OCI-LY7 (cell line): ENCODE measurements at regions of chr17 and their contacts with region 1.

Region 1: GRCh38 chr17:58631523-58632323 is 60.1 kb downstream of the TEX14 start:
- DNase-seq: peak; percentile 98
- H3K4me3 ChIP-seq: peak overlapping the region; percentile 68
- H3K27ac ChIP-seq: peak overlapping the region; percentile 83
- H3K4me1 ChIP-seq: peaks cover 17% of the 10 kb centered on the region
- CTCF ChIP-seq: peak; percentile 41

Region 2: GRCh38 chr17:57902800-57903759 is 728.6 kb before region 1 on chr17:
- CTCF ChIA-PET with region 1: no interaction called
- POLR2A ChIA-PET with region 1: no interaction called
- intact Hi-C with region 1: loop called (anchors 2 kb)
- DNase-seq: peak; percentile 91
- H3K4me3 ChIP-seq: peak overlapping the region; percentile 33
- H3K27ac ChIP-seq: peak overlapping the region; percentile 60
- H3K4me1 ChIP-seq: peaks cover 53% of the 10 kb centered on the region
- CTCF ChIP-seq: no peak

Region 3: DNA sequence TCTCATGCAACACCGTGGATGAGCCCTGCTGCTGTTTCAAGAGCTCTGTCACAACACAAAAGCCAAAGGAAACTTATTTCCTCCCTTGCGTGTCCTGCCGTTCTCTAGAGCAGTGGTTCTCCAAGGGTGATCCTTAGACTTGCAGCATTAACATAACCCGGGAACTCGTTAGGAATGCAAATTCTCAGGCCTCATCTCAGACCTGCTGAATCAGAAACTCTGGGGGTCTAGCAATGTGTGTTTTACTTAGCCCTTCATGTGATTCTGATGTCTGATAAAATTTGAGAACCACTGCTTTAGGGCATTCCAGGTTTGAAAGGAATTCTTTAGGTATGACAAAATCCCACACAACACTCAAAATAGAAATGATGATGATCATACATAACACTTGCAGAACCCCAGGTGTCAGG is 65.9 kb before region 1 on chr17:
- CTCF ChIA-PET with region 1: no interaction called
- POLR2A ChIA-PET with region 1: interaction called, 14 read pairs
- intact Hi-C with region 1: no loop called
- DNase-seq: peak; percentile 45
- H3K4me3 ChIP-seq: peak overlapping the region; percentile 38
- H3K27ac ChIP-seq: peak overlapping the region; percentile 80
- H3K4me1 ChIP-seq: peaks cover 80% of the 10 kb centered on the region
- CTCF ChIP-seq: no peak

Region 4: GRCh38 chr17:58587702-58588254 is 43.9 kb before region 1 on chr17:
- CTCF ChIA-PET with region 1: interaction called, 5 read pairs
- POLR2A ChIA-PET with region 1: interaction called, 14 read pairs
- intact Hi-C with region 1: loop called (anchors 1 kb)
- DNase-seq: peak; percentile 73
- H3K4me3 ChIP-seq: no peak overlapping the region
- H3K27ac ChIP-seq: no peak overlapping the region
- H3K4me1 ChIP-seq: no peaks in the 10 kb centered on the region
- CTCF ChIP-seq: peak; percentile 98

Region 5: GRCh38 chr17:58643140-58643539 is 11.4 kb after region 1 on chr17:
- CTCF ChIA-PET with region 1: no interaction called
- POLR2A ChIA-PET with region 1: interaction called, 33 read pairs
- intact Hi-C with region 1: no loop called
- DNase-seq: no peak
- H3K4me3 ChIP-seq: no peak overlapping the region
- H3K27ac ChIP-seq: no peak overlapping the region
- H3K4me1 ChIP-seq: no peaks in the 10 kb centered on the region
- CTCF ChIP-seq: no peak

Region 6: DNA sequence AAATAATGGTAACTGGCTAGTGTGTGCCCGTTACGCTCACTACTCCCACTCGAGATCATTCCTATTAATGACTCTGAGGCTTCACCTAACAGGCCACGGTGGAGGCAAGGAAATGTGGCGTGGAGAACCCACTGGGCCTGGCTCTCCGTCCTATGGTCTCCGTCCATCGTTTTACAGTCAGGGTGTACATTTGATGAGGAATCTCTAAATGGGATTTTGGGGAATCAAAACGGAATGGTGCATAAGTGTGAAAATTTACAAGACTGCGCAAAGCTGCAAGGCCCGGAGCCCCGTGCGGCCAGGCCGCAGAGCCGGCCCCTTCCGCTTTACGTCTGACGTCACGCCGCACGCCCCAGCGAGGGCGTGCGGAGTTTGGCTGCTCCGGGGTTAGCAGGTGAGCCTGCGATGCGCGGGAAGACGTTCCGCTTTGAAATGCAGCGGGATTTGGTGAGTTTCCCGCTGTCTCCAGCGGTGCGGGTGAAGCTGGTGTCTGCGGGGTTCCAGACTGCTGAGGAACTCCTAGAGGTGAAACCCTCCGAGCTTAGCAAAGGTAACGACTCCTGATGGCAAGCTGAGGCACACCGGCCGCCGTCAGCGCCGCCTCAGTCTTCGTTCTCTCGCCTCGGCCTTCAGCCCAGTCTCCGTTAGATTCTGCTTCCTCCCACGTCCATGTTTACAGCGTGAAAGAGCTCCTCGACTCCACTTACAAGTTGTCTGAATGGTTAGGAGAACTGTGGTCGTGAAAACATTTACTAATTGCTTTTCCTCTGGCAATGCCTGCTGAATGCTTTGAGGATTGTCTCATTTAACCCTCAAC is 60.7 kb after region 1 on chr17 and contains the start of gene RAD51C:
- CTCF ChIA-PET with region 1: no interaction called
- POLR2A ChIA-PET with region 1: interaction called, 18 read pairs
- intact Hi-C with region 1: loop called (anchors 2 kb)
- DNase-seq: peak; percentile 93
- H3K4me3 ChIP-seq: peak within 1 kb of the TSS; percentile 84
- H3K27ac ChIP-seq: peak within 1 kb of the TSS; percentile 67
- H3K4me1 ChIP-seq: peaks cover 23% of the 10 kb centered on the region
- CTCF ChIP-seq: no peak
- total RNA-seq, gene RAD51C: 51.0 and 69.1 TPM in 2 replicates

Region 7: DNA sequence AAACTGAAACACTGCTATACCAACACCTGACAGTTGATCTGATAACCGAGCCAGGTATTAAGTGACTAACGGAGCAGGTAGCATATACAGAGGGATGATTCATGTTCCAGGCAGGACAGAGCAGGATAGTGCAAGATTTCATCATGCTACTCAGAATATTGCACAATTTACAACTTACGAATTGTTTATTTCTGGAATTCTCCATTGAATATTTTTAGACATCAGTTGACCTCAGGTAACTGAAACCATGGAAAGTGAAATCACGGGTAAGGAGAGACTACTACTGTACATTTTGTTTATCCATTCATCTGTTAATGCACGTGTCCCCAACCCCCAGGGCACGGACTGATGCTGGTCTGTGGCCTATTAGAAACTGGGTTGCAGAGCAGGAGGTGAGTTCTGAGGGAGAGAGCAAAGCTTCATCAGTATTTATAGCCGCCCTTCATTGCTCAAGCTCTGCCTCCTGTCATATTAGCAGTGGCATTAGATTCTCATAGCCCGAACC is 109.5 kb after region 1 on chr17:
- CTCF ChIA-PET with region 1: no interaction called
- POLR2A ChIA-PET with region 1: no interaction called
- intact Hi-C with region 1: no loop called
- DNase-seq: no peak
- H3K4me3 ChIP-seq: no peak overlapping the region
- H3K27ac ChIP-seq: no peak overlapping the region
- H3K4me1 ChIP-seq: peaks cover 5% of the 10 kb centered on the region
- CTCF ChIP-seq: no peak